Naive thymus-derived CD4-positive, alpha-beta T cell (primary cell): ENCODE measurements at regions of chr14 and their contacts with region 1.

Region 1: GRCh38 chr14:37985826-37986470 is 221.8 kb upstream of the SSTR1 start:
- DNase-seq: peak; percentile 5 to 61 (median 54)
- ATAC-seq: peak; percentile 53
- H3K4me3 ChIP-seq: no peak overlapping the region
- H3K4me3 Mint-ChIP-seq: no peak overlapping the region
- H3K27ac ChIP-seq: no peak overlapping the region
- H3K27ac Mint-ChIP-seq: no peak overlapping the region
- H3K4me1 ChIP-seq: peaks cover 4 to 5% of the 10 kb centered on the region in 2 donors
- H3K4me1 Mint-ChIP-seq: peaks cover 0 to 20% (median 6%) of the 10 kb centered on the region in 7 donors
- H3K27me3 ChIP-seq: no peaks in the 10 kb centered on the region
- H3K27me3 Mint-ChIP-seq: no peaks in the 10 kb centered on the region

Region 2: DNA sequence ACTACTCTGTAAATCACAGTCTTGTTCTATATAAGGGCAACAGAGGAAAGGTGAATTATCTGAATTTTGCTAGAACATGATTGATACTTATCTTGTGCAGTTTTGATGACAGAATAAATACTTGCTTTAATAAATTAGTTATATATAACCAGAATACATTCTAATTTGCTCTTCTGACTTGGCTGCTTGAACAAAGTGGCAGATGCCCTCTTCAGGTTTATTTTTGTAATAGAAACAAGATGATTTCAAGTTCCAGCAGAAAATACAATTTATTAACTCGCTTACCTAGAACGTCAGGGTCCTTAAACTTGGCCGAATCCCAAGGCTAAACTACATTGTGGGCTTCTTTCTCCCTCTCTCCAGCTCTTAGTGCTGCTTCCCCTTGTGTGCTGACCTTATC is 164.1 kb after region 1 on chr14:
- CTCF ChIA-PET with region 1: interaction called, 4 read pairs
- POLR2A ChIA-PET with region 1: no interaction called
- intact Hi-C with region 1: loop called in 1 of 2 experiments (anchors 1 kb)
- DNase-seq: peak in 1 of 9 donors; percentile 5
- ATAC-seq: no peak
- H3K4me3 ChIP-seq: no peak overlapping the region
- H3K4me3 Mint-ChIP-seq: no peak overlapping the region
- H3K27ac ChIP-seq: no peak overlapping the region
- H3K27ac Mint-ChIP-seq: peak overlapping the region in 1 of 9 donors; percentile 73
- H3K4me1 ChIP-seq: no peaks in the 10 kb centered on the region
- H3K4me1 Mint-ChIP-seq: peaks cover 0 to 9% (median 0%) of the 10 kb centered on the region in 7 donors
- H3K27me3 ChIP-seq: no peaks in the 10 kb centered on the region
- H3K27me3 Mint-ChIP-seq: no peaks in the 10 kb centered on the region

Region 3: DNA sequence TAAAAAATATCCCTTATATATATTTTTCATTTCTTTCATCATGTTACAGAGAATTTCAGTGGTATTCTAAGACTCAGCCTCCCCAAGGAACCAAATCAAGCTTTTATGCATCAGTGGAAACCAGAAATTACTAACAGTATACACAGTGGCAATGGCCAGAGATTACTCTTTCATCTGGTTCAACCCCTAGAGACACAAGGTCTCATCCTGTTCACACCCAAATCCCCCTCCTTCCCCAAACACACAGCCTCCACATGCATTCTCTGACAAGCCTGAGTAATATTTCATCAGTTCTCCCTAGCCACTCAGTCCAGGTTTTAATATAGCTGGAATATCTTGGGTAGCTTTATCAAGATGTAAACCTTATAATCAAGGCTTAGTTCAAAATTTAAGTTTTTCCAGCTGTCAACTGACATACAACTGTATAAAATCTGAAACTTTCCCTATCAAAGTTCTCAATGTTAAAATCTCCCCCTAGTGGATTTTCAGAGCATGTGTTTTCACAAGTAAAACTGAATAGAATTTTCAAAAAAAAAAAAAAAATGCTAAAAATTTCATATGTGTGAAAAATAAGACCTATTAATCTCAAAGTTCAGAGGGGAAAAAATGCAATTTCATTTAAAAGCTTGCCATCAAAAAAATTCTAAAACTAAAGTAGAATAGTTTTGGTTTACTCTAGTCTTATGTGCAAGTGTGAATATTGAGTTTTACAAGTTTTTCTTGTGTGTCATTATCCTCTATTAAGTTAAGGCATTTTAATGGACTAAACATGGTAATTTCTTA is 211.2 kb after region 1 on chr14:
- CTCF ChIA-PET with region 1: interaction called, 32 read pairs
- POLR2A ChIA-PET with region 1: no interaction called
- intact Hi-C with region 1: loop called (anchors 1 kb)
- DNase-seq: peak in 5 of 9 donors; percentile 23 to 49 (median 35)
- ATAC-seq: no peak
- H3K4me3 ChIP-seq: no peak overlapping the region
- H3K4me3 Mint-ChIP-seq: no peak overlapping the region
- H3K27ac ChIP-seq: no peak overlapping the region
- H3K27ac Mint-ChIP-seq: peak overlapping the region in 1 of 9 donors; percentile 60
- H3K4me1 ChIP-seq: peaks cover 0 to 4% of the 10 kb centered on the region in 2 donors
- H3K4me1 Mint-ChIP-seq: peaks cover 0 to 8% (median 5%) of the 10 kb centered on the region in 7 donors
- H3K27me3 ChIP-seq: no peaks in the 10 kb centered on the region
- H3K27me3 Mint-ChIP-seq: peaks cover 0 to 2% (median 0%) of the 10 kb centered on the region in 5 donors